RWPE1 (cell line): ENCODE measurements at regions of chr10 and their contacts with region 1.

Region 1: GRCh38 chr10:97185326-97186058 is at the start of gene SLIT1:
- DNase-seq: no peak
- H3K27ac ChIP-seq: no peak within 1 kb of the TSS
- CTCF ChIP-seq: no peak

Region 2: GRCh38 chr10:97196223-97197029 is 10.9 kb after region 1 on chr10:
- CTCF ChIA-PET with region 1: interaction called, 10 read pairs
- POLR2A ChIA-PET with region 1: no interaction called
- DNase-seq: peak; percentile 68
- H3K27ac ChIP-seq: no peak overlapping the region
- CTCF ChIP-seq: peak; percentile 77

Region 3: GRCh38 chr10:97292097-97292862 is 106.8 kb after region 1 on chr10 and contains the start of gene ARHGAP19:
- CTCF ChIA-PET with region 1: no interaction called
- POLR2A ChIA-PET with region 1: no interaction called
- DNase-seq: peak; percentile 100
- H3K27ac ChIP-seq: peak within 1 kb of the TSS; percentile 99
- CTCF ChIP-seq: peak; percentile 47; the same call in 1 of the 2 replicates